B cell (primary cell): ENCODE measurements at regions of chr16 and their contacts with region 1.

Region 1: GRCh38 chr16:85821441-85822135 is 22.1 kb downstream of the COX4I1 start:
- DNase-seq: peak; percentile 90
- ATAC-seq: peak; percentile 94
- H3K4me3 ChIP-seq: no peak overlapping the region
- H3K4me3 Mint-ChIP-seq: no peak overlapping the region
- H3K27ac ChIP-seq: no peak overlapping the region
- H3K27ac Mint-ChIP-seq: peak overlapping the region; percentile 21
- H3K4me1 ChIP-seq: peaks cover 11 to 32% of the 10 kb centered on the region in 2 donors
- H3K4me1 Mint-ChIP-seq: peaks cover 29% of the 10 kb centered on the region
- H3K27me3 ChIP-seq: no peaks in the 10 kb centered on the region
- H3K27me3 Mint-ChIP-seq: no peaks in the 10 kb centered on the region
- CTCF ChIP-seq: peak; percentile 99

Region 2: GRCh38 chr16:85524630-85525419 is 296.8 kb before region 1 on chr16:
- CTCF ChIA-PET with region 1: no interaction called
- POLR2A ChIA-PET with region 1: no interaction called
- intact Hi-C with region 1: no loop called
- DNase-seq: no peak
- ATAC-seq: no peak
- H3K4me3 ChIP-seq: no peak overlapping the region
- H3K4me3 Mint-ChIP-seq: no peak overlapping the region
- H3K27ac ChIP-seq: no peak overlapping the region
- H3K27ac Mint-ChIP-seq: no peak overlapping the region
- H3K4me1 ChIP-seq: peaks cover 0 to 5% of the 10 kb centered on the region in 2 donors
- H3K4me1 Mint-ChIP-seq: no peaks in the 10 kb centered on the region
- H3K27me3 ChIP-seq: peaks cover 0 to 29% (median 6%) of the 10 kb centered on the region in 4 experiments
- H3K27me3 Mint-ChIP-seq: peaks cover 19% of the 10 kb centered on the region
- CTCF ChIP-seq: no peak

Region 3: GRCh38 chr16:85759631-85760419 is 61.8 kb before region 1 on chr16:
- CTCF ChIA-PET with region 1: interaction called, 16 read pairs
- POLR2A ChIA-PET with region 1: interaction called, 5 read pairs
- intact Hi-C with region 1: no loop called
- DNase-seq: peak; percentile 76
- ATAC-seq: no peak
- H3K4me3 ChIP-seq: peak overlapping the region in 4 of 5 experiments; percentile 8 to 49 (median 22)
- H3K4me3 Mint-ChIP-seq: peak overlapping the region; percentile 70
- H3K27ac ChIP-seq: peak overlapping the region; percentile 88 to 94
- H3K27ac Mint-ChIP-seq: peak overlapping the region; percentile 100
- H3K4me1 ChIP-seq: peaks cover 75 to 82% of the 10 kb centered on the region in 2 donors
- H3K4me1 Mint-ChIP-seq: peaks cover 61% of the 10 kb centered on the region
- H3K27me3 ChIP-seq: no peaks in the 10 kb centered on the region
- H3K27me3 Mint-ChIP-seq: no peaks in the 10 kb centered on the region
- CTCF ChIP-seq: peak; percentile 57

Region 4: DNA sequence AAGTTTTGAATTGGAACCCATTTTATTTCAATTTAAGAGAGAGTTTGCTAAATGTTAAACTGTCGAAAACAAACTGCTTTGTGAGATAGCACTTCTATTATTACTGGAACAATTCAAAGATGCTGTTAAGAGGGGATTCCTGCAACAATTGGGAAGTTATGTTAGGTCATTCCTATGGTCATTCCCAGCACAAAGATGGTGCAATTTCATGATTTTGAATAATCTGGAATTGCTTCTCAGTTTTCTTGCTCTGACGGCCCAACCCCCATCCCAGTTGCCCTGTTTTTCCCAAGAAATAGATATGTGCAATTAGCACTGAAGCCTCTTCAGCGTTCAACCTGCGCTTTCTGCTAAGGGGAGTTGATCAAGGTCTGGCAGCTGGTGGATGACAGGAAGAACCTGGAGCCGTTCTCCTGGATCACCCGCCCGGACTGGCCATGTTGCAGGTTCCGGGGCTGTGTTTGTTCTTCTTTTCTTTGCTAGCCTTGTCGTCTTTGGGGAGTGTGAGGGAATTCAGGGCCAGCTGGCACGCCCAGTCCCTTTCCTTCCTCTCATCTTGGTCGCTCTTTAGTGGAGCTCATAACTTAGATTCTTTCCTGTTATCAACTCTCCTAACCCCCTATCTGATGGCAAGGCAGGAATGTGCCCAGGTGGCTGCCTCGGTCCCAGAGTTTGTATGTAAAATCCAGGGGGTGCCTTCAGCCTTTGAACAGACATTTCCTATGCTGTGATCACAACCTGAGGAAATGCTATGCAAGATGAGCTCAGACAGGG is 48.4 kb after region 1 on chr16:
- CTCF ChIA-PET with region 1: interaction called, 17 read pairs
- POLR2A ChIA-PET with region 1: no interaction called
- intact Hi-C with region 1: loop called (anchors 2 kb)
- DNase-seq: no peak
- ATAC-seq: no peak
- H3K4me3 ChIP-seq: peak overlapping the region in 2 of 5 experiments; percentile 3 to 28
- H3K4me3 Mint-ChIP-seq: peak overlapping the region; percentile 59
- H3K27ac ChIP-seq: peak overlapping the region; percentile 33 to 74
- H3K27ac Mint-ChIP-seq: peak overlapping the region; percentile 84
- H3K4me1 ChIP-seq: peaks cover 53 to 66% of the 10 kb centered on the region in 2 donors
- H3K4me1 Mint-ChIP-seq: peaks cover 78% of the 10 kb centered on the region
- H3K27me3 ChIP-seq: no peaks in the 10 kb centered on the region
- H3K27me3 Mint-ChIP-seq: no peaks in the 10 kb centered on the region
- CTCF ChIP-seq: no peak

Region 5: DNA sequence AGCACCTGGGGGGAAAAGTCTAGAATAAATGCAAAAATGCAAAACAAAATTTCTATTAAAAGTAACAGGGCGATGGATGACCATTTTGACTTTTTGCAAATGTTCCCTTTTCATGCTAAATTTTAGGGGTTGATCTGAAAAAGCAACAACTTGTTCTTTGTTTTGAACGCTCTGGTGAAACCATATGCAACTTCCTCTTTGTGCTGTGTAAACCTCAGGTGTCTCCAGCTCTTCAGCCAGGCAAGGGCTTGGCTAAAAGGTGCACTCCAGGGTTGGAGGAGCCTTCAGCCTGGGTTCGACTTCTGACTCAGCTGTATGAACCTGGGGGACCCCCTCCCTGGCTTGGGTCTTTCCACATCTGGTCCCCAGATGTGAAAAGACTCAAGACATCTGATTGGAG is 86.9 kb after region 1 on chr16:
- CTCF ChIA-PET with region 1: interaction called, 364 read pairs
- POLR2A ChIA-PET with region 1: interaction called, 7 read pairs
- intact Hi-C with region 1: no loop called
- DNase-seq: peak; percentile 85
- ATAC-seq: peak; percentile 62
- H3K4me3 ChIP-seq: peak overlapping the region in 4 of 5 experiments; percentile 1 to 50 (median 13)
- H3K4me3 Mint-ChIP-seq: peak overlapping the region; percentile 75
- H3K27ac ChIP-seq: peak overlapping the region; percentile 80 to 82
- H3K27ac Mint-ChIP-seq: peak overlapping the region; percentile 92
- H3K4me1 ChIP-seq: peaks cover 97 to 100% of the 10 kb centered on the region in 2 donors
- H3K4me1 Mint-ChIP-seq: peaks cover 95% of the 10 kb centered on the region
- H3K27me3 ChIP-seq: no peaks in the 10 kb centered on the region
- H3K27me3 Mint-ChIP-seq: no peaks in the 10 kb centered on the region
- CTCF ChIP-seq: no peak

Region 6: DNA sequence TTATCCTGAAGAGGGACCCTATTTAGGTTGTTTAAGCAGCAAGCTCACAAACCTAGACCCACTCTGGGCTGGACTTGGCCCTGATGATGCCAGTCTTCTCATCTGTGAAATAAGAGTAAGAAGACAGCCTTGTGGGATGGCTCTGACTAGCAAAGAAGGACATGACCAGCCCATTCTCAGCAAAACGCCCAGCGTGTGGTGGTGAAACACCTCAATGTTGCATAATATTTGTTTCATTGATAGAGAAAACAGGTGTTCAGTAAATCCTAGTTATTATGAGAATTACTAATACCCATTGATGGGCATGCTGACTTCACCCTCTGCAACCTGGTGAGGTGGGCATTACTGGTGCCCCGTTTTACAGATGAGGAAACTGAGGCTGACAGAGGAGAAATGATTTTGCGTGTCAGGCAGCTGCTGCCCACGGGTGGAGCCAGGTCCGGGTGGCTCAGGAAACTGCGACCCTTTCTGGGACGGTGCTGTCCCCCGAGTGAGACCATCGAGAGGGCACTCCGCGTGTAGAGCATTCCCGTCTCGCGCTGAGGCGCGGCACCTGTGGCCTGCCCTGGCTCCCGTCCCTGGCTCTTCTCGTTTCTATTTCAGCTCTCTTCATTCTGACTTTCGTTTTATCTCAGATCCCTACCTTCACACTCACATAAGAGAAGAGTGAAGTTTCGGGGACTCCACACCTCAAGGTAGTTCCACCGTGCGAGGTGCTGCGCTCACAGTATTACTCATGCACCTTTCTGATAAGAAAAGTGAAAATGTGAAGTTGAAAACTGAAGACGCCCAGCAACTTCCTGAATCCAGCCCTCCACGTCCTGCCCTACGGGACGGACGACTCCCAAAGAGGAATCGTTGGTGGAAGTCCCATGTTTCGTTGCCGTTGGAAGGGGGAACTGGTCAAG is 125.9 kb after region 1 on chr16:
- CTCF ChIA-PET with region 1: interaction called, 16 read pairs
- POLR2A ChIA-PET with region 1: interaction called, 4 read pairs
- intact Hi-C with region 1: loop called (anchors 1 kb)
- DNase-seq: peak; percentile 87
- ATAC-seq: peak; percentile 63
- H3K4me3 ChIP-seq: peak overlapping the region; percentile 41 to 68 (median 64)
- H3K4me3 Mint-ChIP-seq: peak overlapping the region; percentile 94
- H3K27ac ChIP-seq: peak overlapping the region; percentile 88 to 92
- H3K27ac Mint-ChIP-seq: peak overlapping the region; percentile 98
- H3K4me1 ChIP-seq: peaks cover 70 to 79% of the 10 kb centered on the region in 2 donors
- H3K4me1 Mint-ChIP-seq: peaks cover 84% of the 10 kb centered on the region
- H3K27me3 ChIP-seq: no peaks in the 10 kb centered on the region
- H3K27me3 Mint-ChIP-seq: no peaks in the 10 kb centered on the region
- CTCF ChIP-seq: no peak

Region 7: DNA sequence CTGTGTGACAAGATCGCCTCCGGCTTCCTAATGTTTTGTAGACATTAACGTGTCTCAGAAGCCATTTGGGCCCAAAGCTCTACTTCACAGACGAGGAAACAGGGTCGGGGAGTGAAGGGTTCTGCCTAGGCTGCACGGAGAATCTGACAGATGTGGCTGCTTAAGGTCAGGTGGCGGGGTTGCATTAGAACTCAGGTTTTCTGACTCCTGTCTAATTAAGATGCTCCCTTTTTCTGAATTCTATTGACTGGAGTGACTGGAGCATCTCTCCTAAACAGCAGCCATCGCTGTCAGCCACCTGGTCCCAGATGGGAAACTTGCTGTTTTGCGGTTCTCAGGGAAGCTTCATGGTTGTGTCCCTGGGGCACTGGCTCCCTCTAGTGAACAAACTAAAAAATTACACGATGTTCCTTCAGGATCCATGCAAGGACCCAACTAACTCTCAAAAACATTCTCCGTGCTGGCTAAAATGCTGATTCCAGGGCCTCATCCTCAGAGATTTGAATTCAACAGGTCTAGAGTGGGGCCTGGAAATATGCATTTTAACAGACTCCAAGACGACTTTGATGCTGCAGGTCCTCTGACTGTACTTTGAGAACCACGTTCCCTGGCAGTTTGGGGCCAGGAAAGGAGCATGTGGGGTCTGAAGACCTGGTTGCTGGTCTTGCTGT is 194.7 kb after region 1 on chr16:
- CTCF ChIA-PET with region 1: interaction called, 370 read pairs
- POLR2A ChIA-PET with region 1: interaction called, 10 read pairs
- intact Hi-C with region 1: loop called (anchors 1 kb)
- DNase-seq: peak; percentile 83
- ATAC-seq: peak; percentile 61
- H3K4me3 ChIP-seq: no peak overlapping the region
- H3K4me3 Mint-ChIP-seq: no peak overlapping the region
- H3K27ac ChIP-seq: no peak overlapping the region
- H3K27ac Mint-ChIP-seq: peak overlapping the region; percentile 43
- H3K4me1 ChIP-seq: peaks cover 32 to 40% of the 10 kb centered on the region in 2 donors
- H3K4me1 Mint-ChIP-seq: peaks cover 35% of the 10 kb centered on the region
- H3K27me3 ChIP-seq: peaks cover 0 to 28% (median 5%) of the 10 kb centered on the region in 4 experiments
- H3K27me3 Mint-ChIP-seq: peaks cover 8% of the 10 kb centered on the region
- CTCF ChIP-seq: peak; percentile 87

Region 8: GRCh38 chr16:86519649-86520316 is 698.2 kb after region 1 on chr16:
- CTCF ChIA-PET with region 1: interaction called, 59 read pairs
- POLR2A ChIA-PET with region 1: no interaction called
- intact Hi-C with region 1: loop called (anchors 1 kb)
- DNase-seq: peak; percentile 81
- ATAC-seq: no peak
- H3K4me3 ChIP-seq: no peak overlapping the region
- H3K4me3 Mint-ChIP-seq: no peak overlapping the region
- H3K27ac ChIP-seq: no peak overlapping the region
- H3K27ac Mint-ChIP-seq: no peak overlapping the region
- H3K4me1 ChIP-seq: peaks cover 7 to 14% of the 10 kb centered on the region in 2 donors
- H3K4me1 Mint-ChIP-seq: peaks cover 8% of the 10 kb centered on the region
- H3K27me3 ChIP-seq: peaks cover 0 to 75% (median 35%) of the 10 kb centered on the region in 4 experiments
- H3K27me3 Mint-ChIP-seq: peaks cover 51% of the 10 kb centered on the region
- CTCF ChIP-seq: peak; percentile 99